Heart left ventricle (tissue), 16 donors: ENCODE measurements at regions of chr3 and their contacts with region 1.

Region 1: GRCh38 chr3:98824256-98824655 is 61.1 kb downstream of the ST3GAL6 start:
- DNase-seq: no peak
- ATAC-seq: peak in 2 of 4 donors; percentile 16 to 31
- H3K4me3 ChIP-seq: no peak overlapping the region
- H3K27ac ChIP-seq: no peak overlapping the region
- H3K4me1 ChIP-seq: peaks cover 0 to 27% (median 5%) of the 10 kb centered on the region in 12 donors
- H3K27me3 ChIP-seq: no peaks in the 10 kb centered on the region
- CTCF ChIP-seq: peak in 2 of 12 donors; percentile 24 to 28
- POLR2A ChIP-seq: no peak

Region 2: DNA sequence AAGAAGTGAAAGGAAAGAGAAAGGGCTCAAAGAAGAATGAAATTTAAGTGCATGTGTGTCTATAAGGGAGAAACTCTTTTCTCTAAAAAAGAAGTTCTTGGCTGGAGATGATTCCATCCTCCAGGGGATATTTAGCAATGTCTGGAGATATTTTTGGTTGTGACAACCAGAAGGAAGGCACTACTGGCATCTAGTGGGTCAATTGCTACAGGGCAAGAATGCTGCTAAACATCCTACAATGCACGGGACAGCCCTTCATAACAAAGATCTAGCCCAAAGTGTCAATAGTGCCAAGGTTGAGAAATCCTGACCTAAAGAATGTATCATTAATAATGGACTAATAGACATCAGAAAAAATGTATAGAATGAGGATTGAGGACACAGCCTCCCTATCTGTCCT is 118.5 kb before region 1 on chr3:
- intact Hi-C with region 1: no loop called
- DNase-seq: no peak
- ATAC-seq: no peak
- H3K4me3 ChIP-seq: no peak overlapping the region
- H3K27ac ChIP-seq: no peak overlapping the region
- H3K4me1 ChIP-seq: peaks cover 0 to 27% (median 10%) of the 10 kb centered on the region in 12 donors
- H3K27me3 ChIP-seq: no peaks in the 10 kb centered on the region
- CTCF ChIP-seq: peak in 2 of 12 donors; percentile 17 to 25
- POLR2A ChIP-seq: no peak

Region 3: GRCh38 chr3:98778852-98779413 is 45.3 kb before region 1 on chr3:
- intact Hi-C with region 1: no loop called
- DNase-seq: no peak
- ATAC-seq: peak; percentile 44 to 80 (median 75)
- H3K4me3 ChIP-seq: no peak overlapping the region
- H3K27ac ChIP-seq: peak overlapping the region in 11 of 12 donors; percentile 24 to 79 (median 49)
- H3K4me1 ChIP-seq: peaks cover 0 to 60% (median 44%) of the 10 kb centered on the region in 12 donors
- H3K27me3 ChIP-seq: no peaks in the 10 kb centered on the region
- CTCF ChIP-seq: no peak
- POLR2A ChIP-seq: no peak

Region 4: GRCh38 chr3:99172736-99173657 is 348.7 kb after region 1 on chr3:
- intact Hi-C with region 1: loop called in 5 of 10 experiments (anchors 5 to 10 kb)
- DNase-seq: peak in 3 of 5 donors; percentile 23 to 38 (median 36)
- ATAC-seq: peak in 2 of 4 donors; percentile 39 to 46
- H3K4me3 ChIP-seq: no peak overlapping the region
- H3K27ac ChIP-seq: no peak overlapping the region
- H3K4me1 ChIP-seq: no peaks in the 10 kb centered on the region
- H3K27me3 ChIP-seq: no peaks in the 10 kb centered on the region
- CTCF ChIP-seq: peak; percentile 10 to 74 (median 50)
- POLR2A ChIP-seq: no peak